ENCODE measurements at regions of chr10 and their contacts with region 1.

Region 1: DNA sequence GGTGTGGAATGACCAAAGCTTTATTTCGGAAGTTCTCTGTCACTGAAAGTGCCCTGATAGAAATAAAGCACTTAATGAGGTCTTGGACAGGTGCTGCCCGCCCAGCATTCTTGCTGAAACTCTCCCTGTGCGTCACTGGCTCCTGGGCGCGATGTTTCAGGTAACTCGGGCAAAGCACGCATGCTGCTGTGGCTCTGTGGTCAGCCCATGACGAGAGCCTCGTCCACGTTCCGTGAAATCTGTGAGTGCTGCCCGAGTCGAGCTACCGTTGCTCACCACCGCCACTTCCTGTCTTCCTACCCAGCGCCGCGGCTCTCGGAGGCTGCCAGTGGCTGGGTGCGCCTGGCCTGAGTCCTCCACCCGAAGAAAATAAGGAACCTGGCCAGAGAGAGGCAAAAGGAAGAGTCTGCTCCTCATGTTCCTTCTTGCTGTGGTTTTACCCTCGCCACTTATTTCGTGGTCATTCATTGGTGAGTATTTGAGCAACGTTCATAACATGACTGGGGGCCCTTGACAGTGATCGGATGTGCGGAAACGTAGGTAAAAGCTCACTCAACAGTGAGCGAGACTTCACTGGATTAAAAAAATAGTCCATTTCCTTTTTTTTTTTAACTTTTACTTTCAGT is 95.5 kb downstream of the MAP3K8 start:
- H3K4me3 ChIP-seq: no peak overlapping the region
- H3K27ac ChIP-seq: no peak overlapping the region
- H3K4me1 ChIP-seq: no peaks in the 10 kb centered on the region
- CTCF ChIP-seq: no peak

Region 2: GRCh38 chr10:30413996-30414576 is 115.4 kb before region 1 on chr10:
- CTCF ChIA-PET with region 1: interaction called, 25 read pairs
- POLR2A ChIA-PET with region 1: no interaction called
- H3K4me3 ChIP-seq: no peak overlapping the region
- H3K27ac ChIP-seq: no peak overlapping the region
- H3K4me1 ChIP-seq: no peaks in the 10 kb centered on the region
- CTCF ChIP-seq: peak; percentile 36; the same call in 1 of the 2 replicates

Measured in HEK293 (cell line).